Adrenal gland (tissue), 19 donors: ENCODE measurements at regions of chr16 and their contacts with region 1.

Region 1: GRCh38 chr16:11396241-11397048 is 51.2 kb downstream of the RMI2 start:
- DNase-seq: peak; percentile 77 to 88 (median 82)
- H3K4me3 ChIP-seq: no peak overlapping the region
- H3K27ac ChIP-seq: no peak overlapping the region
- H3K4me1 ChIP-seq: peaks cover 0 to 2% of the 10 kb centered on the region in 2 donors
- H3K27me3 ChIP-seq: no peaks in the 10 kb centered on the region
- CTCF ChIP-seq: peak; percentile 95 to 99 (median 98)
- POLR2A ChIP-seq: no peak

Region 2: GRCh38 chr16:11181899-11182279 is 214.6 kb before region 1 on chr16:
- intact Hi-C with region 1: no loop called
- DNase-seq: peak in 2 of 7 donors; percentile 35 to 41
- H3K4me3 ChIP-seq: no peak overlapping the region
- H3K27ac ChIP-seq: no peak overlapping the region
- H3K4me1 ChIP-seq: no peaks in the 10 kb centered on the region
- H3K27me3 ChIP-seq: no peaks in the 10 kb centered on the region
- CTCF ChIP-seq: no peak
- POLR2A ChIP-seq: no peak

Region 3: DNA sequence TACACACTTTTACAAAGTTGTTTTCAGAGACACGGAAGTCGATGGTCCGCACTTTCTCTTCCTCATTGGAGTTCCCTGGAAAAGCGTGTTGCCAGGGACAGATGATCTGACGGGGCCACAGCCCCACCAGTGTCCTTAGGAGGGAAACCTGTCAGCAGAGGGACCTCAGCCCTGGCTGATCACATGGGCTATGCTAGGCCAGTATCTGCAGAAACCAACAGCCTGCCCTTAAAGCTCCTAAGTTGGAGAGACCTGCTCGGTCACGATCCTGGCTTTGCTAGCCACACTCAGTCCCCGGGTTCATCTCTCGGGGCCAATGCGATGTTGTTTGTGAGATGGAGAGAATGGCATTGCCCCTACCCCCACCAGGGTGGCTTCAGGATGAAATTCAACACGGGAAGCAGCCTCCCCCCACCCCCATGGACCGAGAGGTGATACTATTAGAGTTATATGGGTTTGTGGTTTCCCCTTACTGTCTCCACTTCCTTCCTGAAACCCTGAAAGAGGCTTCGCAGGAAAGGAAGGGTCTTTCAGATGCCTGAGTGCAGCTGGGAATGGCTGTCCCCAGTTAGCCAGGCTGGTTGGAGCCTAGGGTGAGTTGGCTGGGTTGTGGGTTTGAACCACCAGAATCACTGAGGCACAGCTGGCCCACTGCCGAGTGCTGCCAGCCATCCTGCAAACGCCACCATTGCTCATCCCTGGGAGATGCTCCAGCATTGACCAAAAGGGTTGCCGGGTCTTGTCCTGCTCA is 34.6 kb before region 1 on chr16:
- intact Hi-C with region 1: no loop called
- DNase-seq: peak in 1 of 7 donors; percentile 30
- H3K4me3 ChIP-seq: no peak overlapping the region
- H3K27ac ChIP-seq: peak overlapping the region in 2 of 5 donors; percentile 11 to 91
- H3K4me1 ChIP-seq: peaks cover 24 to 27% of the 10 kb centered on the region in 2 donors
- H3K27me3 ChIP-seq: no peaks in the 10 kb centered on the region
- CTCF ChIP-seq: no peak
- POLR2A ChIP-seq: no peak

Region 4: DNA sequence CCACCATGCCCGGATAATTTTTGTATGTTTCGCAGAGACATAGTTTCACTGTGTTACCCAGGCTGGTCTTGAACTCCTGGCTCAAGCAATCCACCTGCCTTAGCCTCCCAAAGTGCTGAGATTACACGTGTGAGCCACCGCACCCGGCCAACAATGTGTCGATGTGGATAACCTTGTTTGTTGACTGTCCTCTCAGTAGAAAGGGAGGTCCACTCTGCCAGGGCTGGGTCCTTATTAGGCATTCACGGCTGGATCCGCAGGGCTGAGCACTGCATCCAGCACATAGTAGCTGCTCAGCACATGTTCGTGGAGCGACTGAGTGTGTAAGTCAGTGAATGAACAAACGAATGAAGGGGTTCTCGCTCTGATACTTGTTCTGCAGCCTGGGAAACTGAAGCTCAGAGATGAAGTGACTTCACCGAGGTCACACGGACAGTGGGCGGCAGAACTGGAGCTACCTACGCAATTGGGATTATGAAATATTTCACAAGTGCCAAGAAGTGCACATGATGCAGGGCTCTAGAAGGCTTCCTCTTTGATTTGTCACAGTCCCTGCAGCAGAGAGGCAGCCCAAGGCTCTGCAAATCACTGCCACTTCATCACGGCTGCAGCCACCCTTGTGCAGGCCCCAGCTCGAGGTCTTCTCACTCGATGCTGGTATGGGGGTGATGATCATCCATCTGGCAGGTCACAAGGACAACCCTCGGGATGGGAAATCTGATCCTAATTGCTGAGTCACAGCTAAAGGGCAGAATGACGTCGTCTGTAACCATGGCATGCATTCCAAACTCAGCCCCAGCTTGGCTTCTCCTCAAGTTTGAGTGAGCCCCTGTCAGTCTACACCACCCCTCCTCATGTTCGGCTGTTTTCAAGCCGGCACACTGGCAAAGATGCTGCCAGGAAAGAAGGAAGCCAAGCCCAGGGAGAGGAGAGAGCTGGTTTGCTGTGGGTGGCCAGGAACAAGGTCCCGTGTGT is 243.8 kb after region 1 on chr16:
- intact Hi-C with region 1: loop called (anchors 5 to 10 kb)
- DNase-seq: peak; percentile 88 to 98 (median 96)
- H3K4me3 ChIP-seq: no peak overlapping the region
- H3K27ac ChIP-seq: peak overlapping the region; percentile 77 to 96 (median 90)
- H3K4me1 ChIP-seq: peaks cover 10 to 17% of the 10 kb centered on the region in 2 donors
- H3K27me3 ChIP-seq: no peaks in the 10 kb centered on the region
- CTCF ChIP-seq: no peak
- POLR2A ChIP-seq: peak in 1 of 2 donors; percentile 81

Region 5: GRCh38 chr16:11715246-11715947 is 319.0 kb after region 1 on chr16:
- intact Hi-C with region 1: loop called (anchors 5 kb)
- DNase-seq: no peak
- H3K4me3 ChIP-seq: no peak overlapping the region
- H3K27ac ChIP-seq: no peak overlapping the region
- H3K4me1 ChIP-seq: peaks cover 0 to 3% of the 10 kb centered on the region in 2 donors
- H3K27me3 ChIP-seq: no peaks in the 10 kb centered on the region
- CTCF ChIP-seq: no peak
- POLR2A ChIP-seq: no peak

Region 6: DNA sequence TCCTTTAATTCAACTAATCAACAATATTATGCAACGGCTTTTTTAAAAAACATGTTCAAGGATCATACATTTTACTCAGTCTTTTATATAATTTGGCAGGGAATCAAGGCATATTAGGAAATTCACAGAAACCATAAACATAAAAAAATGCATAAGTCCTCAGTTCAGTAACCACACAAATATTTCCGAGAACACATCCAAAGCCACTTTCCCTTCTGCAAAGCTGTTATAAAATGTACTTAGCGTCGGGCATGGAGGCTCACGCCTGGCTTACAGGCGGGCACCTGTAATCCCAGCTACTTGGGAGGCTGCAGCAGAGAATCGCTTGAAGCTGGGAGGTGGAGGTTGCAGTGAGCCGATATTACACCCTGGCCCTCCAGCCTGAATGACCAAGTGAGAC is 410.3 kb after region 1 on chr16:
- intact Hi-C with region 1: loop called (anchors 5 to 10 kb)
- DNase-seq: no peak
- H3K4me3 ChIP-seq: no peak overlapping the region
- H3K27ac ChIP-seq: no peak overlapping the region
- H3K4me1 ChIP-seq: no peaks in the 10 kb centered on the region
- H3K27me3 ChIP-seq: no peaks in the 10 kb centered on the region
- CTCF ChIP-seq: no peak
- POLR2A ChIP-seq: no peak